ENCODE measurements at regions of chr1 and their contacts with region 1.

Region 1: GRCh38 chr1:32052887-32053286 is 19.9 kb upstream of the TMEM39B start:
- DNase-seq: no peak
- ATAC-seq: no peak
- H3K4me3 Mint-ChIP-seq: no peak overlapping the region
- H3K27ac Mint-ChIP-seq: no peak overlapping the region
- H3K4me1 Mint-ChIP-seq: peaks cover 18% of the 10 kb centered on the region
- H3K27me3 Mint-ChIP-seq: no peaks in the 10 kb centered on the region
- CTCF ChIP-seq: no peak

Region 2: DNA sequence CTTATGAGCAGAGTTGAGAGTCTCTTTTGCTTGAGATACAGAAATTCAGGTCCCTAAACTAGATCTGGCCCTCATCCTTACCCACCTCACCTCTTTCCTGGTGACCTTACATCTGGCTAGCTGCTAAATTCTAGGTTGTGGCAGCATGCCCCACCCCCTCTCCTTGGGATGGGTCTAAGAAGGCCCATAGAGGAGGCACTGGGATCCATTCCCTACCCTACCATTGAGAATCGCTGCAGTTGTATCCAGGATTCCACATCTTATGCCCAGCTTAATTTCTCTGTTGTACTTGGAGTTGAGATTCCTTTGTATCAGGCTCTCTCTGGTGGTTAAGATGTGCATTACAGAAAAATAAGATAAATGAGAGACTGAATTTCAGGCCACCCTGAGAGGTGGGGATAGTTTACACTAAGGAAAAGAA is 10.4 kb after region 1 on chr1:
- CTCF ChIA-PET with region 1: interaction called, 17 read pairs
- POLR2A ChIA-PET with region 1: interaction called, 8 read pairs
- intact Hi-C with region 1: no loop called
- DNase-seq: no peak
- ATAC-seq: peak; percentile 67
- H3K4me3 Mint-ChIP-seq: no peak overlapping the region
- H3K27ac Mint-ChIP-seq: peak overlapping the region; percentile 68
- H3K4me1 Mint-ChIP-seq: peaks cover 15% of the 10 kb centered on the region
- H3K27me3 Mint-ChIP-seq: no peaks in the 10 kb centered on the region
- CTCF ChIP-seq: peak; percentile 66

Measured in activated CD8-positive, alpha-beta T cell treated with anti-CD3 and anti-CD28 coated beads for 36 hours (primary cell).